Activated CD8-positive, alpha-beta memory T cell treated with anti-CD3 and anti-CD28 coated beads, Interleukin-2, amount 10 ng/mL, durations not matched to agents 7 days and 5 days (primary cell): ENCODE measurements at regions of chr19 and their contacts with region 1.

Region 1: DNA sequence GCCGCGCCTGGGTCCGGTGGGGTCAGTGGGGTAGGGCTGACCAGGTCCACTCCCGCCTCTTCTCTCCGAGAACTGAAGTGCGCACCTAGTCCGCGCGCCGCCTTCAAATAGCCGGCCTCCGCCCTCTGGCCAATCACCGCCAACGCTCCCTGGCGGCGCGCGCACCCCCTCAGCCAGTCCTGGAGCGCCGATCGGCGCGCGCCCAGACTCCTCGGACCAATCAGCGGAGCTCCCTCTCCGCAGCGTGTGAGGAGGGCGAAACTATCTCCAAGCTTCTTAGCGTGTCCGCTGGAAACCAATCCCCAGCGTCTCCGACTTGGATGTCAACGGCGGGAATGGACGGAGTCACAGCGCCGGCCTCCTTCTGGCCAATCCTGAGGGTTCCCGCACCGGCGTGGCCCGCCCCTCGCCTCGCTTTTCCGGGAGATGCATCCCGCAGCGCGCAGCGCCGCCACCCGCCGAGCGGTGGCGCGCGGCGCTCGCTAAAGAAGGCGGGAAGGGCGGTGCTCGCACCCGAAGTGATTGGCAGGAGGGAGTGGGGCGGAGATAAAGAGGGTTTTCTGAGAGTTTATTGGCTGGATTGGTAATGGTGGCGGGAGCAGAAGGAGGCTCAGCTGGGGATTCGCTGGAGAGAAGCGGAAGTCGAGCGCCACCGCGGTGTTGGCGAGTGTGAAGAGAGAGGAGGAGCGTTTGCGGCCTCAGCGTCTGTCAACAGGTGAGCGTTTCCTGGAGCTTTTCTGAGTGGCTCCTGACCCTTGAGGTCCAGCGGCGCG is at the start of gene ASF1B:
- DNase-seq: peak; percentile 99
- ATAC-seq: peak; percentile 88
- H3K4me3 Mint-ChIP-seq: peak within 1 kb of the TSS; percentile 88
- H3K27ac Mint-ChIP-seq: peak within 1 kb of the TSS; percentile 94
- H3K4me1 Mint-ChIP-seq: peaks cover 34% of the 10 kb centered on the region
- H3K27me3 Mint-ChIP-seq: no peaks in the 10 kb centered on the region
- total RNA-seq, gene ASF1B: 117 to 124 TPM

Region 2: DNA sequence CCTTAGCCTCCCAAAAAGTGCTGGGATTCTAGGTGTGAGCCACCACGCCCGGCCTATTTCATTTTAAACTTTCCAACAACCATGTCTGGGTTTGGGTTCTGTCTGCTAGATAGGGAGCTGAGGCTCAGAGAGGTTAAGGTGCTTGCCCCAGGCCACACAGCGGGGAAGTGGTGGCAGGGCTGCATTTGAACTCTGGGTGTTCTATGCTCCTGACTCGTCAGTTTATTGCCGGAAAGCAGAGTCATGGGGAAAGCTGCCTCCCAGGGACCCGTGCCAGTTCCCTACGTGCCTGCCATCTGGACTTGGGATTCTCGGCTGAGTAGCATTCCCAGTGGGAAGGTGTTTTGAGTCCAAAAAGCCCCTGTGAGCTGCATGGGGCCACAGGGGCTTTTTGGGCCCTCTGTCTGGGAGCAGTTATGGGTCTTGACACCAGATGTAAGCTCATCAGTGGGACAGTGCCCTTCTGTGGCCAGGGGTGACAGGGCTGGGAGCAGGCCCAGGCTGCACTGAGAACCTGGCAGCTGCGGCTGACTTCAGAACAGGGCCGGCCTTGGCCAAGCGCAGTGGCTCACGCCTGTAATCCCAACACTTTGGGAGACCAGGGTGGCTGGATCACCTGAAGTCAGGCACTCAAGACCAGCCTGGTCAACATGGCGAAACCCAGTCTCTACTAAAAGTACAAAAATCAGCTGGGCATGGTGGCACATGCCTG is 141.5 kb before region 1 on chr19:
- CTCF ChIA-PET with region 1: no interaction called
- DNase-seq: no peak
- ATAC-seq: no peak
- H3K4me3 Mint-ChIP-seq: no peak overlapping the region
- H3K27ac Mint-ChIP-seq: no peak overlapping the region
- H3K4me1 Mint-ChIP-seq: peaks cover 9% of the 10 kb centered on the region
- H3K27me3 Mint-ChIP-seq: no peaks in the 10 kb centered on the region

Region 3: GRCh38 chr19:14015524-14016035 is 121.1 kb before region 1 on chr19:
- CTCF ChIA-PET with region 1: no interaction called
- DNase-seq: no peak
- ATAC-seq: no peak
- H3K4me3 Mint-ChIP-seq: no peak overlapping the region
- H3K27ac Mint-ChIP-seq: no peak overlapping the region
- H3K4me1 Mint-ChIP-seq: peaks cover 2% of the 10 kb centered on the region
- H3K27me3 Mint-ChIP-seq: no peaks in the 10 kb centered on the region

Region 4: GRCh38 chr19:14081325-14082093 is 55.2 kb before region 1 on chr19:
- CTCF ChIA-PET with region 1: interaction called, 38 read pairs
- DNase-seq: peak; percentile 100
- ATAC-seq: peak; percentile 97
- H3K4me3 Mint-ChIP-seq: peak overlapping the region; percentile 92
- H3K27ac Mint-ChIP-seq: peak overlapping the region; percentile 92
- H3K4me1 Mint-ChIP-seq: peaks cover 16% of the 10 kb centered on the region
- H3K27me3 Mint-ChIP-seq: no peaks in the 10 kb centered on the region

Region 5: GRCh38 chr19:14158276-14159023 is 21.8 kb after region 1 on chr19:
- CTCF ChIA-PET with region 1: interaction called, 10 read pairs
- DNase-seq: no peak
- ATAC-seq: no peak
- H3K4me3 Mint-ChIP-seq: no peak overlapping the region
- H3K27ac Mint-ChIP-seq: no peak overlapping the region
- H3K4me1 Mint-ChIP-seq: no peaks in the 10 kb centered on the region
- H3K27me3 Mint-ChIP-seq: no peaks in the 10 kb centered on the region

Region 6: DNA sequence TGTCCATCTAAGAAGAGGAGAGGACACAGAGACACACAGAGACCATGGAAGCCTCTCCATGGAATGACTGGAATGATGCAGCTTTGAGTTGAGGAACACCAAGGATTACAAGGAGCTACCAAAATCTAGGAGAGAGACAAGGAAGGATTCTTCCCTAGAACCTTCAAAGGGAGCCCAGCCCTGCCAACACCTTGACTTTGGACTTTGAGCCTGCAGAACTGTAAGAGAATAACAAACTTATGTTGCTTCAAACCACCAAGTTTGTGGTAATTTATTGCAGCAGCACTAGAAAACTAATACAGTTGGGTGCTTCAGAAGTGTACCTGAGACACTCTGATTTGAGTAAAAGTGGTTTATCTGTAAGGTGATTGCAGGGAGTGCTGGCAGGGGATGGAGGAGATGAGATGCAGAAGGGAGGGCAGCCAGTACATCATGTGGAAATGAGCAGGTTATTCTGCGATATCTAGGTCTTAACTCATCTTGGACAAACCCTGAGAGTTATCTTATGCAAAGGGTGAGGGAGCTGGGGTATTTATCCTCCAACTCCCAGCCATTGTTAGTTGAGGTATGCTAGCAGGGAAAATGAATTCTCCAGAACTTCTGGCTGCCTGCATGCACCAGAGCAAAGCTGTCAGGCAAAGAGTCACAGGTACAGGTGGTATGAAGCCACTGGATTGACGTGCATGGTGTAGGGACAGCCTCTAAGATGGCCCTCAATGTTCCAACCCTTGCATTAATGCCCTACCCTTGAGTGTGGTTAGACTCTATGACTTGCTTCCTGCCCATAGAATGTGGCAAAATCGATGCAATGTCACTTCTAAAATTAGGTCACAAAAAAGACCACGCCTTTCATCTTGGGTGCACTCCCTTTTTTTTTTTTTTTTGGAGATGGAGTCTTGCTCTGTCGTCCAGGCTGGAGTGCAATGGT is 100.6 kb after region 1 on chr19:
- CTCF ChIA-PET with region 1: no interaction called
- DNase-seq: no peak
- ATAC-seq: peak; percentile 51
- H3K4me3 Mint-ChIP-seq: no peak overlapping the region
- H3K27ac Mint-ChIP-seq: no peak overlapping the region
- H3K4me1 Mint-ChIP-seq: peaks cover 14% of the 10 kb centered on the region
- H3K27me3 Mint-ChIP-seq: no peaks in the 10 kb centered on the region

Region 7: DNA sequence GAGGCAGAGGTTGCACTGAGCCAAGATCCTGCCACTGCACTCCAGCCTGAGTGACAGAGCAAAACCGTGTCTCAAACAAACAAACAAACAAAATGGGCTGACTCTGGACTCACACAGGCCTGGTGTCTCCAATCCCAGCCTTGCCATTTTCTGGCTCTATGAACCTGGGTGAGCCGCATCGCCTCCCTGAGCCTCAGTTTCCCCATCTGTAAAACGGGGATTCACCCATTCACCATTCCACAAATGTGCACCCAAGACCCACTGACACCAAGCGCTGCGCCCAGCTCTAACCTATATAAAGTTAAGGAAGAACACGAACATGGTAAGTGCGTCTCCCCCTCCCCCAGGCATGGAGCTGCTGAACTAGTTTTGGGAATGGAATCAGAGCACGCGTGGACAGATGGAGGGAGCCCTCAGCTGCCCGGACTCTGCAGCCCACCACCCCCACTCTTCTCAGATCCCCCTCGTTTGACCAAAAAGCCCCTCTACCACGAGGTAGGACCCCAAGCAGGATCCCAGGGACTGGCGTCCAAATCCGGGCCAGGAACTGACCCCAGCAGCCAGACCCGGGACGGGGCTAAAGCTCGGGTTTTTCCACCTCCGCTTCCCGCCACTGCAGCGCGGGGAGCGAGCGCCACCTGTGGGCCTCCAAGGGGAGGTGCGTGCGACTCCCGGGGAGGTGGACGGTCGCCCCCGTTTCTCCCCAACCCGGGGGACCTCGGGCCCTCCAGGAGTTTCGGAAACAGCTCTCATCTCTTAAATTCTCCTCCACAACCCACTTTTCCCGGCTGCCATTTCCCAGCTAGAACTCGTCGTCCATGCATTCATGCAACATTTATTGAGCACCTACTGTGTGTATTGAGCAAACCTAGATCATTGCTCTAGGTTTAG is 211.5 kb after region 1 on chr19:
- CTCF ChIA-PET with region 1: interaction called, 38 read pairs
- DNase-seq: peak; percentile 71
- ATAC-seq: peak; percentile 77
- H3K4me3 Mint-ChIP-seq: peak overlapping the region; percentile 61
- H3K27ac Mint-ChIP-seq: peak overlapping the region; percentile 54
- H3K4me1 Mint-ChIP-seq: peaks cover 20% of the 10 kb centered on the region
- H3K27me3 Mint-ChIP-seq: no peaks in the 10 kb centered on the region

Region 8: DNA sequence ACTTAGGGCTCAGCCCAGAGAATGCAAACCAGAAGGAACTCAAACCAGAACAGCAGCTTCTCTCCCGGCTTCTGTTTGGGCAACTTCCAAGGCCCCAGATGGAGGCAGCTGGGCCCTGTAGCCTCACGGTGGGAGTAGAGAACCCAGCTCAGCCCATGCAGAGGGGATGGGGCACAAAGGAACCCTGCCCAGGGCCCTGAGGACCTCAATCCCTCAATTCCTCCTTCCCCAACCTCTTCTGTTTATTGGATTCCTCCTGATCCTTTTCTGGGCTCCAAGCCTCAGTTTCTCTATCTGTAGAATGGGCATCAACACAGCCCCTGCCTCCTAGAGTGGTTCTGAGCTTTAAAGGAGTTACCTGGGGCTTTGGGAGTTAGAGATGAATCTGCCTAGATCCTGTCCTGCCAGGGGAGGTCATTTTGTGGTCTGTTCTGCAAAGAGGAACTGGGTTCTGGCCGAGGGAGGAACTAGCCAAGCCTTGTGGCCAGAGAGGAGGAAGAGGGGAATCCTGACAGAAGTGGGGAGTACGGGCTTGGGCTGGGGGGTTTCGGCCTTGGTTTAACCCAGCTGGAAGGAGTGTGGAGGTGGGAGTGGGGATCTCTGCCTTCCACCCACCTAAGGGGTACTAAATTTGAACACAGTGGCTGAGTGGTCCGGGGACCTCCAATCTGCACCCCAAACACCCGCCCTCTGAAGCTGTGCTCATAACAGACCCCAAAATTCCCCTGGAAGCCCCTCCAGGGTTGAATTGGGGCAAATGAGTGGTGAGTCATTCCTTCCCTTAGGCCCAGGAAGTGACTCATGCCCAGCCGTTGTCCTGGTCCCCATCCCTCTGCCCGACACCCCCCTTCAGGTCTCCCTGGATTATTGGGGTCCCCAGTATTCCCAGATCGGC is 247.2 kb after region 1 on chr19:
- CTCF ChIA-PET with region 1: interaction called, 20 read pairs
- DNase-seq: peak; percentile 83
- ATAC-seq: peak; percentile 25
- H3K4me3 Mint-ChIP-seq: peak overlapping the region; percentile 98
- H3K27ac Mint-ChIP-seq: peak overlapping the region; percentile 97
- H3K4me1 Mint-ChIP-seq: peaks cover 38% of the 10 kb centered on the region
- H3K27me3 Mint-ChIP-seq: no peaks in the 10 kb centered on the region